ENCODE measurements at regions of chr3 and their contacts with region 1.

Region 1: GRCh38 chr3:100603469-100603868 is 5.9 kb upstream of the ADGRG7 start:
- DNase-seq: peak; percentile 80
- ATAC-seq: peak; percentile 88
- H3K4me3 ChIP-seq: no peak overlapping the region
- H3K27ac ChIP-seq: no peak overlapping the region
- H3K4me1 ChIP-seq: peaks cover 17% of the 10 kb centered on the region
- H3K27me3 ChIP-seq: no peaks in the 10 kb centered on the region
- CTCF ChIP-seq: peak; percentile 81

Region 2: GRCh38 chr3:99859825-99860224 is 743.6 kb before region 1 on chr3:
- CTCF ChIA-PET with region 1: no interaction called
- POLR2A ChIA-PET with region 1: no interaction called
- intact Hi-C with region 1: no loop called
- DNase-seq: peak; percentile 93
- ATAC-seq: peak; percentile 70
- H3K4me3 ChIP-seq: no peak overlapping the region
- H3K27ac ChIP-seq: peak overlapping the region; percentile 49
- H3K4me1 ChIP-seq: peaks cover 49% of the 10 kb centered on the region
- H3K27me3 ChIP-seq: no peaks in the 10 kb centered on the region
- CTCF ChIP-seq: no peak

Region 3: DNA sequence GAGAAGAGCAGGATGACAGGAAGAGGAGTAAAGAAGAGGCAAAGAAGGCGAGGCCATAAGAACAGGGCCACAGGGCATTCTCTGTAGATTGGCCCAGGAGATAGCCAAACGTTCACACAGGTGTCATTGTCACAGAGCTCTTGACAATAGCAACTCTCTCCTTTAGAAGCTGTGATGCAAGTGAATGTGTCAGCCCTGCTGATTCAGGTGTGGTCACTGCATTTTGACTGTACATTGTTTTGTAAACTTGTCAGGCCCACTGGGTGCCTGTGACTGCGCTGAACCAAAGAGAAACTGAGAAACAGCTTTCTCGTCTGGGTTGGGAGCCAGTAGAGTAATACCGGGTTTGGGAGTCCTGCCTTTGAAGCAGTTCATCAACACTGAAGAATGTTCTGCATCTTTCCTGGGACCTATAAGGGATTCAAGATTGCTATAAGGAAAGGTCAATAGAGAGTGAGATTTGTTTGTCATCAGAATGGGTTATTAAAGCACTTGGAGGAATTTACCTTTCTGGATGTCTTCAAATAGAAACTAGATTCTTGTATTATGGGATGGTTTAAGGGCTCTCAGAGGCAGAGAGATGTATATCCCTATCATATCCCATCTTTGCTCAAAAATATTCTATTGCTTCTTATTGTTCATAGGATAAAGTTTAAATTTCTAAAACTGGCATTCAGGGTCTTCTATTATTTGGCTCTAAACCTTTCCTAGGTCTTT is 65.7 kb before region 1 on chr3:
- CTCF ChIA-PET with region 1: no interaction called
- POLR2A ChIA-PET with region 1: no interaction called
- intact Hi-C with region 1: no loop called
- DNase-seq: peak; percentile 72
- ATAC-seq: no peak
- H3K4me3 ChIP-seq: no peak overlapping the region
- H3K27ac ChIP-seq: peak overlapping the region; percentile 76
- H3K4me1 ChIP-seq: peaks cover 49% of the 10 kb centered on the region
- H3K27me3 ChIP-seq: no peaks in the 10 kb centered on the region
- CTCF ChIP-seq: no peak

Region 4: DNA sequence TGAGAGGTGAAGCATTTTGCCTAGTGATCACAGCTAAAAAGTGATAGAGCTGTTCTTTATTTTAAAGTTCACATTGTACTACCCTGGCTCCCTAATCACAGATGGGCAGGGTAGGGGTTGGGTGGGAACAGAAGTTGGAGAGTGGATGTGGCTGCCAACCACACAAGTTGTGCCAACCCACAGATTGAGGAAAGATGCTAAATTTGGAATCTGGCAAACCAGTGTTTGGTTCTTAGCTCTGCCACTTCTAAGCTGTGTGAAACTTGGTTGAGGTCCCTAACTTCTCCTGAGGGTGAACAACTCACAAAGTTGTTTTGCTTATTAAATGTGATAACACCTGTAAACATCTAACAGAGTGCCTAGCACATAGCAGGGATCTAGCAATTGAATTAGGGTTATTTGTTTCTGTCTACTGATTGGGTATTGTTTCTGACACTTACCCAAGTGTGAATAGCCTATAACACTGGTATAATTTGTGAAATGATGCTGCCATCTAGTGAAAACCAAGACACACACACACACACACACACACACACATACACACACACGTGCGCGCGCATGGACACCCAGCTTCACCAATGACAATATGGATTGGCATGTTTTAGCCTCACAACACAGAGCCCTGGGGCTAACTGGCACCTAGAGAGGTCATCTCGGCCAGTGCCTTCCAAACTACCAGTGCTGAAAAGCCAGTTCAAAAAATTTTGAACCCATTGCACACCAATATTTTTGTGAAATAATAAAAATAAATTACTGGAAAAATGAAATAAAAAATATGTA is 31.2 kb after region 1 on chr3:
- CTCF ChIA-PET with region 1: interaction called, 3 read pairs
- POLR2A ChIA-PET with region 1: no interaction called
- intact Hi-C with region 1: loop called (anchors 2 kb)
- DNase-seq: peak; percentile 62
- ATAC-seq: peak; percentile 78
- H3K4me3 ChIP-seq: no peak overlapping the region
- H3K27ac ChIP-seq: no peak overlapping the region
- H3K4me1 ChIP-seq: peaks cover 12% of the 10 kb centered on the region
- H3K27me3 ChIP-seq: no peaks in the 10 kb centered on the region
- CTCF ChIP-seq: peak; percentile 52

Region 5: GRCh38 chr3:100708967-100709841 is 105.7 kb after region 1 on chr3 and contains the start of gene TFG:
- CTCF ChIA-PET with region 1: interaction called, 23 read pairs
- POLR2A ChIA-PET with region 1: interaction called, 3 read pairs
- intact Hi-C with region 1: loop called (anchors 1 kb)
- DNase-seq: peak; percentile 100
- ATAC-seq: peak; percentile 89
- H3K4me3 ChIP-seq: peak within 1 kb of the TSS; percentile 80
- H3K27ac ChIP-seq: peak within 1 kb of the TSS; percentile 93
- H3K4me1 ChIP-seq: peaks cover 21% of the 10 kb centered on the region
- H3K27me3 ChIP-seq: no peaks in the 10 kb centered on the region
- CTCF ChIP-seq: no peak
- total RNA-seq, gene TFG: 97.9 and 106 TPM in 2 replicates

Region 6: DNA sequence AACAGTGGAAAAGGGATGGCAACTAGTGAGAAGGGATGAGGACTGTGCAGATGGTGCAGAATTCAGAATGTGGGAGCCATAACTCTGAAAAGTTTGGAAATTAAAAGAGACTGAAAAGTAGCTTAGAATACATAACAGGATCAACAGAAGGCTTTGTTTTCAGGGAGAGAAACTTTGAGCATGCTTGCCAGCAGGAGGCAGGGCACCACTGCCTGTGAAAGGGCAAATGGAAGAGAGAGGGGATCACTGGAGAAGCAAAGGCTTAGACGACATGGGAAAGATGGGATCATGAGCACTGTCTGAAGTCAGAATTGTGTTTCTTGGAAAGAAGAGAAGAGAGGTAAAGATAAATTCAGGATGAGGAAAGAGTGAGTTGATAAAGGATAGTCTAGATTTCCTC is 290.1 kb after region 1 on chr3:
- CTCF ChIA-PET with region 1: no interaction called
- POLR2A ChIA-PET with region 1: no interaction called
- intact Hi-C with region 1: loop called (anchors 10 kb)
- DNase-seq: peak; percentile 62
- ATAC-seq: peak; percentile 48; the same call in 1 of the 2 replicates
- H3K4me3 ChIP-seq: no peak overlapping the region
- H3K27ac ChIP-seq: no peak overlapping the region
- H3K4me1 ChIP-seq: peaks cover 31% of the 10 kb centered on the region
- H3K27me3 ChIP-seq: no peaks in the 10 kb centered on the region
- CTCF ChIP-seq: peak; percentile 88